Adrenal gland (tissue), 19 donors: ENCODE measurements at regions of chr11 and their contacts with region 1.

Region 1: GRCh38 chr11:75371941-75372789 is 20.7 kb upstream of the ARRB1 start:
- DNase-seq: no peak
- H3K4me3 ChIP-seq: no peak overlapping the region
- H3K27ac ChIP-seq: no peak overlapping the region
- H3K4me1 ChIP-seq: peaks cover 0 to 4% of the 10 kb centered on the region in 2 donors
- H3K27me3 ChIP-seq: no peaks in the 10 kb centered on the region
- CTCF ChIP-seq: no peak
- POLR2A ChIP-seq: no peak

Region 2: DNA sequence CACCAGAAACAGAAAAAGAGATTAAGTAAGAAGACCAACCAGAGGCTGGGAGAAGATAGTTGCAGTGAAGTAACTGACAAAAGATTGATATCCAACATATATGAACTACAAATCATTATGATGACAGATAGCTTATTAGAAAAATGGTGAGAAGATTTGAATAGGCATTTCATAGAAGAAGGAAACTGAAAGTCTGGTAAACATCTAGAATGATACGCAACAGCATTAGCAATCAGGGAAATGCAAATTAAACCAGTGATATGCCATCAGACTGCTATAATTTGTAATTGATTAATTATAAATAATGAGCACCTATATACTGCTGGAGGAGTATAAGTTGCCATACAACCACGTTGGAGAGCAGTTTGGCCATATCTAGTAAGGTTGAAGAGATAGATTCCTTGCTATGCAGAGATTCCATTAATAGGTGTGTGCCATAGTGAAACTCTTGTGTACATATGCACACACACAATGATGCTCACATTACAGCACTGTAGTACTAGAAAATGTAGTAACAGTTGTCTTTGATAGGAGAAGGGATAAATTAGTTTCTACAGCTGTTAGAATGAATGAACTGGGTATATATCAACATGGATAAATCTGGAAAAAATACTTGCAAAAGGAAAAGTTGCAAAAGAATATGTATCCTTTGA is 603.0 kb before region 1 on chr11:
- intact Hi-C with region 1: loop called in 1 of 2 experiments (anchors 10 kb)
- DNase-seq: no peak
- H3K4me3 ChIP-seq: no peak overlapping the region
- H3K27ac ChIP-seq: no peak overlapping the region
- H3K4me1 ChIP-seq: peaks cover 0 to 7% of the 10 kb centered on the region in 2 donors
- H3K27me3 ChIP-seq: no peaks in the 10 kb centered on the region
- CTCF ChIP-seq: no peak
- POLR2A ChIP-seq: no peak

Region 3: DNA sequence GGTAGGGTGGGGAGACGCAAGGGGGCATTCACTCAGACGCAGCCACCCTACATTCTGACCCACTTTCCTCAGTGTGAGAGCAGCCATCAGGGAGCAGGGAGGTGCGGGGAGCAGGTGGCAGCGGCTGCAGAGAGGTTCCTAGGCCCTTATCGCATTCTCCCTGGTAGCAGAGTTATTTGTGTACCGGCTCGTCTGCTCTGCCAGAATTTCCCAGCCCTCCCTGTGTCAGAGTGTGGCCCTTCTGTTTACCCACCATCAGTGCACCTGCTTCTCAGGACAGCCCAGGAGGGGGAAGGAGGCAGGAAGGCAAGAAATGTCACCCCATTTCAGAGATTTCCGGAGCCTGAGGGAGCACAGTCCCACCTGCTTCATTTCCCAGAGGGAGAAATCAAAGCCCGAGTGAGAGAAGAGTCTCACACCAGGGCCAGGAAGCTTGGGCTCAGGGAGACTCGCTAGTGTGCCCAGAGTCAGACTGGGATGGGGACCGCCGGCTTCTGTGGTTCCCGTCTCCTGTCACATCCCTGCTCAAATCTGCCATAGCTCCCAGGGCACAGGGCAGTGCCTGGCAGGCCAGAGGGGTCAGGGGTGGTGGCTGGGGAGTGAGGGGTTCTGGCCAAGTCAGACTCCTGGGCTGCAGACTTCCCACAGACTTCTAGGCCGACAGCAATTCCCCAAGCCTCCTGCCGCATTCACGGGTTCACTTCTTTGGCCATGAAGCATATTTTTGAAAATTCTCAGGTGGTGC is 70.4 kb before region 1 on chr11:
- intact Hi-C with region 1: no loop called
- DNase-seq: no peak
- H3K4me3 ChIP-seq: no peak overlapping the region
- H3K27ac ChIP-seq: peak overlapping the region in 1 of 5 donors; percentile 49
- H3K4me1 ChIP-seq: no peaks in the 10 kb centered on the region
- H3K27me3 ChIP-seq: no peaks in the 10 kb centered on the region
- CTCF ChIP-seq: no peak
- POLR2A ChIP-seq: no peak